ENCODE measurements at regions of chr13 and their contacts with region 1.

Region 1: GRCh38 chr13:35475960-35476943 is at the start of gene MAB21L1:
- DNase-seq: peak in 1 of 2 donors; percentile 31
- ATAC-seq: peak in 7 of 8 donors; percentile 16 to 71 (median 48)
- H3K4me3 ChIP-seq: peak within 1 kb of the TSS; percentile 35 to 76 (median 60)
- H3K27ac ChIP-seq: peak within 1 kb of the TSS; percentile 22 to 74 (median 49)
- H3K4me1 ChIP-seq: peaks cover 0 to 21% (median 0%) of the 10 kb centered on the region in 9 donors
- H3K27me3 ChIP-seq: peaks cover 0 to 86% (median 0%) of the 10 kb centered on the region in 7 donors
- CTCF ChIP-seq: no peak
- total RNA-seq, gene MAB21L1: 0.08 to 0.49 (median 0.26) TPM in 9 of 10 donors, not detected in the other

Region 2: DNA sequence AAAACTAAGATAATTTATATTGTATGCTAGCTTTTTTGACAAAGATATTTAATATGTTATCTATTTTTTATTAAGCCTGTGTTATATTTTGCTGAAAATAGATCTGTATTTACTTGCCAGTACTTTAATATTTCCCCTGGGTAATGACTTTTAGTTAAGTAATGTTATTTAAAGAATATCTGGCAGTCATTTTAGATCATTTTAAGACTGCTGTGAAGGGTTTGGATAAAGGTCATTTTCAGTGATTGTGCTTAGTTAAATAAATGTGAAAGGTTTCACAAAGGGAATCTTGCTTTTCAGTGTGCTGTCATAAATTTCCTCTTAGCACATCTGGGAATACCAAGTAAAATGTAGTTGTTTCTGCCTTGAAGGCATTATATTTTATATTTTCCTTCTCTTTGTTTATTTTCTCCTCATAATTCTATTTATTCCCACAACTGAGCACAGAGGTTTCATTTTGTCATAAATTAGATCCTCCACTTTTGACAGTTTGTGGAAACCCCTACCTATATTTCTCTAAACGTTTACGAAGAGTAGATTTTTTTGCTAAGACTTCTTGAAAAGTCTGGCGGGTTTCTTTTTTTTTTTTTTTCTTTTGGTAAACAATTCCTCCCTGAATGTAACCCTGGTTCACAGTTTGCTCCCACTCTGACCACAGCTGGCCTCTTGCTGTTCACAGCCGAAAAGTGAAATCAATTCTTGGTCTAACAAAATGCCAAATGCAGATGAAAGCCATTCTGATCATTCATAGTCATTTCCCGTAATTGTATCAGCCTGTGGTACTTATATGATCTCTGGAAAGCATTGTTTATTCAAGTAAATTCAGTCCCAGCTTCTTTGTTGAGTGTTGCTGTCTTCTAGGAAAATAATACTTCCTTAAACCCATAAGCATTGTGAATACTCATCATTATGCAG is 87.6 kb before region 1 on chr13:
- intact Hi-C with region 1: loop called in 1 of 10 experiments (anchors 10 kb)
- DNase-seq: peak in 1 of 2 donors; percentile 2
- ATAC-seq: peak in 5 of 8 donors; percentile 7 to 55 (median 37)
- H3K4me3 ChIP-seq: peak overlapping the region in 2 of 10 donors; percentile 11 to 18
- H3K27ac ChIP-seq: peak overlapping the region in 4 of 10 donors; percentile 15 to 37 (median 24)
- H3K4me1 ChIP-seq: peaks cover 0 to 28% (median 10%) of the 10 kb centered on the region in 9 donors
- H3K27me3 ChIP-seq: no peaks in the 10 kb centered on the region
- CTCF ChIP-seq: no peak

Region 3: GRCh38 chr13:35720690-35721554 is 244.7 kb after region 1 on chr13:
- intact Hi-C with region 1: loop called in 1 of 10 experiments (anchors 10 kb)
- DNase-seq: peak; percentile 35 to 56
- ATAC-seq: peak in 4 of 8 donors; percentile 25 to 57 (median 42)
- H3K4me3 ChIP-seq: peak overlapping the region in 5 of 10 donors; percentile 7 to 20 (median 13)
- H3K27ac ChIP-seq: peak overlapping the region in 3 of 10 donors; percentile 13 to 40 (median 26)
- H3K4me1 ChIP-seq: peaks cover 3 to 46% (median 34%) of the 10 kb centered on the region in 9 donors
- H3K27me3 ChIP-seq: no peaks in the 10 kb centered on the region
- CTCF ChIP-seq: peak; percentile 76 to 92 (median 87)